OCI-LY7 (cell line): ENCODE measurements at regions of chr3 and their contacts with region 1.

Region 1: DNA sequence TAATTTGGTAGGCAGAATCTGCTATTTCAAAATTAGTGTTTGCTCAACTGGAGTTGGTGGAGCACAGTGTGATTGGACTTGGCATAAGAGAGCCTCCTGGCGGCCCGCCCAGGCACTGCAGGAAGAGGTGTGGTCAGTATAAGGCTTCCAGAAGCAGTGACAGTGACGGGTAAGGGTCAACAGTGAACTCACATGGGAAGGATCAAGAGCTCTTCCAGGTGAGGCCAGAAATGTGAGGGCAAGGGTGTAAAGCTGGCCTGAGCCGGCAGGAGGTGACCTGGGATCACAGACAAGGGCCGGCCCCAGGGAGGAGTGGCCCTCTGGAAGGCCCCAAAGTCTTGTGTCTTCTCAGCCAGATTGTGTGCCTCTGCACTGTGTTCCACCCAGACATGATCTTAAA is 93.2 kb upstream of the RNF7 start:
- DNase-seq: peak; percentile 70
- H3K4me3 ChIP-seq: no peak overlapping the region
- H3K27ac ChIP-seq: no peak overlapping the region
- H3K4me1 ChIP-seq: no peaks in the 10 kb centered on the region
- CTCF ChIP-seq: peak; percentile 90

Region 2: DNA sequence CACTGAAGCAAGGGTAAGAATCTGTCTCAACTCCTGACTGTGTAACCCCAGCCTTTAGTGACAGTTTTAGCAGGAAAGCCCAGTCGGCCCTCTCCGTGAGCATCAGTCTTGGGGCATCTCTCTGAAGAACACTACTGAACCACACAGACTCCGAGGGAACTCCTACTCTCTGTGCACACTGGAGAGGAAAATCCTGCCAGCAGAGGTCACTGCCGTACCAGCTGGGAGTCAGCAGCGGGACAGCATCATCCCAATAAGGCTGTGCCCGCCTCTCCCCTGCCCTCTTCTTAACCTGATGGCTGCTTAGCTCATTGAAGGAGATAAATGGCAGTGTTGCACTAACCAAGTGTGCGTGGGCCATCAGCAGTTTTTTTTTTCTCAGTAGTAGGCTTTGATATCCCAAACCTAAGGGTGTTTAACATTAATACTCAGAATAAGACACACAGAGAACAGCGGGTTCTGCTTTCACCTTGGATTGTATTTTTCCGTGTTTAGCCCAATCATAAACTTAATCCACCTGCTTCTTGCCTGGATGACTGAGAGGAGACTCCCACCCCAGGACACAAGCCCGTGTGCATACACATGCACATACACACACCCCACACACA is 184.7 kb before region 1 on chr3:
- CTCF ChIA-PET with region 1: no interaction called
- POLR2A ChIA-PET with region 1: no interaction called
- intact Hi-C with region 1: loop called (anchors 1 kb)
- DNase-seq: peak; percentile 77
- H3K4me3 ChIP-seq: no peak overlapping the region
- H3K27ac ChIP-seq: no peak overlapping the region
- H3K4me1 ChIP-seq: no peaks in the 10 kb centered on the region
- CTCF ChIP-seq: peak; percentile 88

Region 3: DNA sequence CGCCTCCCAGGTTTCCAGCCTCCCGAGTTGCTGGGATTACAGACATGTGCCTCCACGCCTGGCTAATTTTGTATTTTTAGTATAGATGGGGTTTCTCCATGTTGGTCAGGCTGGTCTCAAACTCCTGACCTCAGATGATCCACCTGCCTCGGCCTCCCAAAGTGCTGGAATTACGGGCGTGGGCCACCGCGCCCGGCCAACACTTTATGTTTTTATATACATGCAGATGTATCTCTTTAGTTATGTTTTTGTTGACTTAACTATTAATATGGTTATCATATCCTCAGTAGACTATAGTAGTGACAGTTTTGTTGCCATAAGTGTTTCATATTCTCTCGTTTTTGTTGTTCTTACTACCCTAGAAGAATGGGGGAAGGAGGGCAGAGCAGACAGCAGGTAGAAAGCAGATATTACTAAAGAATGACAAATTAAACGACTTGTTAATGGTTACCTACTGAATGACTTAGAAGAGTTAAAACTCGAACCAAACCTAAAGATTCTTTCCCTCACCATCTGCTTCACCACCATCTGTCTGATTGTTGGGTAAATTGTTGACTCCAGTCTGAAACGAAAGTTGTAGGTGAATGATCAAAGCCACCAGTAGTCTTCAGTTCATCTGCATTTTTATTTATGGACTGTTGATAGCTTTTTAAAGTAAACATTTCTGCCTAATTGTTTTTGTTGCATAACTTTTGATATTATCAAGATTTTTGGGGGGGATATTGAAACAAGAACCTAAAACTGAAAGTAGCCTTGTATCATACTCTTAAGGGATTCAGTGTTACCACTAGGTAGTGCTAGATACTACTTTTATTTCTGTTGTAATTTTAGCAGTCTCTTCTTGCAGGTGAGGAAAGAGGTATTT is 68.8 kb before region 1 on chr3:
- CTCF ChIA-PET with region 1: no interaction called
- POLR2A ChIA-PET with region 1: no interaction called
- intact Hi-C with region 1: loop called (anchors 5 kb)
- DNase-seq: peak; percentile 37
- H3K4me3 ChIP-seq: no peak overlapping the region
- H3K27ac ChIP-seq: no peak overlapping the region
- H3K4me1 ChIP-seq: peaks cover 7% of the 10 kb centered on the region
- CTCF ChIP-seq: peak; percentile 82

Region 4: GRCh38 chr3:141625506-141625905 is 19.4 kb before region 1 on chr3:
- CTCF ChIA-PET with region 1: no interaction called
- POLR2A ChIA-PET with region 1: no interaction called
- intact Hi-C with region 1: no loop called
- DNase-seq: no peak
- H3K4me3 ChIP-seq: no peak overlapping the region
- H3K27ac ChIP-seq: no peak overlapping the region
- H3K4me1 ChIP-seq: no peaks in the 10 kb centered on the region
- CTCF ChIP-seq: no peak

Region 5: DNA sequence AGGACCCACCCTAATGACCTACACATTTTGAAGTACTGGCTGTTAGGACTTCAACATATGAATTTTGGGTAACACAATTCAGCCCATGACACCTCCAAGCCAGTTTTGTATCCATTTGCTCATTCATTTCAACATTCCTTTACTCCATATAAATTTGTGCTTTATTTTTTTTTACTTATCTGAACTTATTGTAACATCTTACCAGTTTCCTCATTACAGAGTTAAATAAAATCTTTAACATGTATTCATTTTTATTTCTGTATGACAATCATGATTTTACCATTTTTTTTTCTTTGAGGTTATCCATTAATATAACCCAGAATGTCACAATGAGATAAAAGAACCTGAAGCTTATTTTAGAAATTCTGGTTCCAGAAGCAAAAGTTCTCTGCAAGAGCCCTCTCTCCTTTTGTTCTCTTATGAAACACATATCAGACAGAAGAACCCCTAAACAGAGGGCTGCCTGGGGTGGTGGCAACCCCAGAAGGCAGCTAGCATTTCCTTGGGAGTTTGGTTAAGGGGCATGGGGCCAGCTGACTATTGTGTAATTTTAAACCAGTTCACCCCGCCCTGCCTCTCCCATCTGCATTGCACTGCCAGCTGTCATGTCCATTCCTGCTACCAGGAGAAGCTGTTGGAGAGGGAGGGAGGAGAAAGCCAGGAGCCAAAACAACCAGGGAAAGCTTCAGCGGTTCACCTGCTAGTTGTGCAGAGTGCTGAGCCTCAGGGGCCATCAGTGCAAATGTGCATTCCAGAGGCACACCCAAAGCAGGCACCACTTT is 183.7 kb after region 1 on chr3:
- CTCF ChIA-PET with region 1: no interaction called
- POLR2A ChIA-PET with region 1: no interaction called
- intact Hi-C with region 1: no loop called
- DNase-seq: no peak
- H3K4me3 ChIP-seq: no peak overlapping the region
- H3K27ac ChIP-seq: no peak overlapping the region
- H3K4me1 ChIP-seq: no peaks in the 10 kb centered on the region
- CTCF ChIP-seq: no peak